ENCODE measurements at regions of chr15 and their contacts with region 1.

Region 1: DNA sequence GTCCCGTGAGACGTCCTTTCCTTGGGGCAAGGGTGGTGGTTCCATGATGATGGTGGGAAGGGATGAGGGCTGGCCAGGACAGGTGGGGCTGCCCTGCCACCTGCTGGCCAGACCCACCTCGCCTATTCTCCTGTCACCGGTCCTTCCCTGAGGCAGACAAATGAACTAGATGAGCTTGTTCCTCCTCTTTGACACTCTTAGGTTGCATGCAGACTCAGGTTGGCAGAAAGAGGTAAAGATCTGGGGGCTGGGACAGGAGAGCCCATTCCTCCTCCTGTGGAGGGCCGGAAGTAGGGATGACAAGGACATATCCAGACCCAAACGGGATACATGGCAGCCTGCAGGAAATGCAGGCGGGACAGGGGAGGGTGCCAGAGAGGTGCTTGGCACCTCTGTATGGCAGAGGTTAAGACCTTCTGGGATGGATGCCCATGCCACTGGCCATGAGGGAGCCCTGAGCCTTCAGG is 38.6 kb downstream of the ACSBG1 start:
- DNase-seq: peak; percentile 18 to 74 (median 41)
- ATAC-seq: peak; percentile 87
- H3K4me3 ChIP-seq: no peak overlapping the region
- H3K4me3 Mint-ChIP-seq: no peak overlapping the region
- H3K27ac ChIP-seq: no peak overlapping the region
- H3K27ac Mint-ChIP-seq: no peak overlapping the region
- H3K4me1 ChIP-seq: no peaks in the 10 kb centered on the region
- H3K4me1 Mint-ChIP-seq: no peaks in the 10 kb centered on the region
- H3K27me3 ChIP-seq: no peaks in the 10 kb centered on the region
- H3K27me3 Mint-ChIP-seq: no peaks in the 10 kb centered on the region
- CTCF ChIP-seq: peak; percentile 72

Region 2: GRCh38 chr15:77966540-77967290 is 229.1 kb before region 1 on chr15:
- CTCF ChIA-PET with region 1: interaction called, 48 read pairs
- POLR2A ChIA-PET with region 1: no interaction called
- intact Hi-C with region 1: loop called in 1 of 2 experiments (anchors 1 kb)
- DNase-seq: peak in 8 of 9 experiments; percentile 30 to 71 (median 55)
- ATAC-seq: peak; percentile 42
- H3K4me3 ChIP-seq: no peak overlapping the region
- H3K4me3 Mint-ChIP-seq: no peak overlapping the region
- H3K27ac ChIP-seq: no peak overlapping the region
- H3K27ac Mint-ChIP-seq: no peak overlapping the region
- H3K4me1 ChIP-seq: no peaks in the 10 kb centered on the region
- H3K4me1 Mint-ChIP-seq: no peaks in the 10 kb centered on the region
- H3K27me3 ChIP-seq: no peaks in the 10 kb centered on the region
- H3K27me3 Mint-ChIP-seq: peaks cover 2% of the 10 kb centered on the region
- CTCF ChIP-seq: peak; percentile 70

Region 3: GRCh38 chr15:78131295-78132061 is 64.3 kb before region 1 on chr15 and contains the start of gene CIB2:
- CTCF ChIA-PET with region 1: interaction called, 114 read pairs
- POLR2A ChIA-PET with region 1: interaction called, 8 read pairs
- intact Hi-C with region 1: loop called (anchors 1 kb)
- DNase-seq: peak; percentile 47 to 89 (median 74)
- ATAC-seq: peak; percentile 87
- H3K4me3 ChIP-seq: peak within 1 kb of the TSS; percentile 82 to 91
- H3K4me3 Mint-ChIP-seq: peak within 1 kb of the TSS; percentile 82
- H3K27ac ChIP-seq: peak within 1 kb of the TSS; percentile 65 to 89
- H3K27ac Mint-ChIP-seq: peak within 1 kb of the TSS; percentile 87
- H3K4me1 ChIP-seq: peaks cover 15% of the 10 kb centered on the region
- H3K4me1 Mint-ChIP-seq: peaks cover 26% of the 10 kb centered on the region
- H3K27me3 ChIP-seq: no peaks in the 10 kb centered on the region
- H3K27me3 Mint-ChIP-seq: no peaks in the 10 kb centered on the region
- CTCF ChIP-seq: peak; percentile 75
- total RNA-seq, gene CIB2: 1.2 to 1.9 TPM

Region 4: GRCh38 chr15:78149068-78149804 is 46.5 kb before region 1 on chr15 and contains the start of gene IDH3A:
- CTCF ChIA-PET with region 1: interaction called, 12 read pairs
- POLR2A ChIA-PET with region 1: no interaction called
- intact Hi-C with region 1: no loop called
- DNase-seq: peak; percentile 99 to 100 (median 100)
- ATAC-seq: peak; percentile 97
- H3K4me3 ChIP-seq: peak within 1 kb of the TSS; percentile 72 to 81
- H3K4me3 Mint-ChIP-seq: peak within 1 kb of the TSS; percentile 91
- H3K27ac ChIP-seq: peak within 1 kb of the TSS; percentile 65 to 67
- H3K27ac Mint-ChIP-seq: peak within 1 kb of the TSS; percentile 91
- H3K4me1 ChIP-seq: peaks cover 18% of the 10 kb centered on the region
- H3K4me1 Mint-ChIP-seq: peaks cover 44% of the 10 kb centered on the region
- H3K27me3 ChIP-seq: no peaks in the 10 kb centered on the region
- H3K27me3 Mint-ChIP-seq: no peaks in the 10 kb centered on the region
- CTCF ChIP-seq: no peak
- total RNA-seq, gene IDH3A: 54.4 to 61.0 TPM

Region 5: DNA sequence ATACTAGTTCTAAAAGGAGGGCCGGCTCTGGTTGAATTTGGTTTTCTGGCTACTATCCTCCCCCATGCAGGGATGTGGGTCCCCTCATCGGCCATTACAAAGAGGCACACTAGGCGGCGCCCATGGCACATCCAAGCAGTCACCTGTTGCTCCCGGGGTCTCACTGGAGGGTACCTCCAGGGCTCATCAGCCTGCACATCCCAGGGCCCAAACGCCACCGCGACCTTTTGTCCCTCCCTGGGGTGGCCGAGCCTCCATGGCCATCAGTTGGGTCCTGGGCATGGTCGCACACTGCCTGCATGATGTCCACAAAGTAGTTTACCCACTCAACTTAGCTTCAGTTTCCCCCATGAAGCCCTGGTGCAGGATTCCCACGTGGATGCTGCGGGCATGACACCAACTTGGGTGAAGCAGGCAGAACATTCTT is 18.3 kb before region 1 on chr15:
- CTCF ChIA-PET with region 1: interaction called, 19 read pairs
- POLR2A ChIA-PET with region 1: no interaction called
- intact Hi-C with region 1: no loop called
- DNase-seq: peak in 5 of 9 experiments; percentile 36 to 49 (median 38)
- ATAC-seq: peak; percentile 41
- H3K4me3 ChIP-seq: no peak overlapping the region
- H3K4me3 Mint-ChIP-seq: no peak overlapping the region
- H3K27ac ChIP-seq: no peak overlapping the region
- H3K27ac Mint-ChIP-seq: no peak overlapping the region
- H3K4me1 ChIP-seq: peaks cover 17% of the 10 kb centered on the region
- H3K4me1 Mint-ChIP-seq: peaks cover 25% of the 10 kb centered on the region
- H3K27me3 ChIP-seq: no peaks in the 10 kb centered on the region
- H3K27me3 Mint-ChIP-seq: peaks cover 3% of the 10 kb centered on the region
- CTCF ChIP-seq: peak; percentile 18

Region 6: DNA sequence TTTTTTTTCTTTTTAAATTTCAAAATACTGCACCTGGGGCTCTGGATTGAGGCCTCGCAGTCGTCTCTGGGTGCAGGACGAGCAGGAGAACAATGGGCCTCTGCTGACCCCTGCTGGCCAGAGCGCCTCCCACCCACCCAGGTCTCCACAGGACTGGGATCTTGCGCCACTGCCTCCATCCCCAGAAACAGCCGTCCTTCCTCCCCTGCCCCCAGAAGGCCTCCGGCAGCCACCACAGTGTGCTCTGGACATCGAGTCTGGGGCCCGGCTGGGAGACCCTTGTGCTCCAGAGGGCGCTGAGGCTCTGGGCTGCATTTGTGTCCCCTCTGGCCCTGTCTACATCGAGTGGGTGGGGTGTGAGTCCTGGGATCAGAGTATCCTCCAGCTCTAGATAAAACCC is 45.2 kb after region 1 on chr15:
- CTCF ChIA-PET with region 1: interaction called, 62 read pairs
- POLR2A ChIA-PET with region 1: no interaction called
- intact Hi-C with region 1: loop called in 1 of 2 experiments (anchors 1 kb)
- DNase-seq: peak; percentile 65 to 90 (median 81)
- ATAC-seq: peak; percentile 96
- H3K4me3 ChIP-seq: no peak overlapping the region
- H3K4me3 Mint-ChIP-seq: no peak overlapping the region
- H3K27ac ChIP-seq: no peak overlapping the region
- H3K27ac Mint-ChIP-seq: no peak overlapping the region
- H3K4me1 ChIP-seq: no peaks in the 10 kb centered on the region
- H3K4me1 Mint-ChIP-seq: peaks cover 1% of the 10 kb centered on the region
- H3K27me3 ChIP-seq: peaks cover 0 to 3% of the 10 kb centered on the region in 2 experiments
- H3K27me3 Mint-ChIP-seq: no peaks in the 10 kb centered on the region
- CTCF ChIP-seq: peak; percentile 79

Measured in CD8-positive, alpha-beta T cell (primary cell).